ENCODE measurements at regions of chr2 and their contacts with region 1.

Region 1: DNA sequence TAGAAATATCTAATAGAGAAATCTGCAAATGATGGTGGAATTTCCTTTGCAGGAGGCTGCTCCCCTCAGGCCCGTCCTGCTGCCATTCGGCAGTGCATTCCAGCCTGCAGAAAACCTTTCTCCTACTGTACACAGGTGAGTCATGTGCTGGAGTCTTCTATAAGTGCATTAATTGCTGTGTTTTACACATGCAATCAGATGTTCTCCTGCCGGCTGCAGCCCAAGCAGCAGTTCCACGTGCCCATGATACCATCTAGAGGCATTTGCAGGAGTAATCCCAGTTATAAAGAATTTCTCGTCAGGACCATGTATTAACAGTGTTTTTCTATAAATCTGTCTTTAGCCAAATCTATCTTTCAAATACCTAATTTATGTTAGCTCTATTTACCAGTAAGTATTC is 304.7 kb upstream of the HNMT start:
- DNase-seq: peak; percentile 36
- H3K4me3 ChIP-seq: no peak overlapping the region
- H3K27ac ChIP-seq: no peak overlapping the region
- H3K4me1 ChIP-seq: no peaks in the 10 kb centered on the region
- H3K27me3 ChIP-seq: no peaks in the 10 kb centered on the region
- CTCF ChIP-seq: peak; percentile 28 to 52

Region 2: DNA sequence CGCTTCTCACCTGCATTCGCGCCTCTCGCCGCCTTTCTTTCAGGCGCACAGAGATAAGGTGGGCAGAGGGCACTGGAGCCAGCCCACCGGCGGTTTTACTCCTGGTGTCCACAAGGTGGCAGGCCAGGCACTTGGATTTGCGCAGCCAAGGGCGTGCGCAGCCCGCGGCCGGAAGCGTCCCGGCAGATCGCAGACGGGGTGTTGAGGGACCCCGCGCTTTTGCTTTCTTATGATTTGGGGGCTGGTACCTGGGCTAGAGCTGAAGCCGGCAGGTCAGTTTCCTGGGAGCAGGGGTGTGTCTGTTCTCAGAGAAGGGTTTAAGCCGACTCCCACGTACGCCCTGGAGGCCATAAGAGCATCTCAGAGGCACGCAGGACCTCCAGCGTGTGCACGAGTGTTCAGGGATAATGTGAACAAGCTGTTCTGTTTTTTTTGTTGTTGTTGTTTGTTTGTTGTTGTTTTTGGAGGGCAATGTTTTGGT is 1236.1 kb before region 1 on chr2:
- CTCF ChIA-PET with region 1: no interaction called
- dilution Hi-C with region 1: no loop called
- in situ Hi-C with region 1: loop called (anchors 25 kb)
- intact Hi-C with region 1: loop called (anchors 1 kb)
- DNase-seq: peak; percentile 45
- H3K4me3 ChIP-seq: peak overlapping the region; percentile 34 to 46 (median 41)
- H3K27ac ChIP-seq: no peak overlapping the region
- H3K4me1 ChIP-seq: no peaks in the 10 kb centered on the region
- H3K27me3 ChIP-seq: peaks cover 3% of the 10 kb centered on the region
- CTCF ChIP-seq: peak; percentile 74 to 87

Region 3: DNA sequence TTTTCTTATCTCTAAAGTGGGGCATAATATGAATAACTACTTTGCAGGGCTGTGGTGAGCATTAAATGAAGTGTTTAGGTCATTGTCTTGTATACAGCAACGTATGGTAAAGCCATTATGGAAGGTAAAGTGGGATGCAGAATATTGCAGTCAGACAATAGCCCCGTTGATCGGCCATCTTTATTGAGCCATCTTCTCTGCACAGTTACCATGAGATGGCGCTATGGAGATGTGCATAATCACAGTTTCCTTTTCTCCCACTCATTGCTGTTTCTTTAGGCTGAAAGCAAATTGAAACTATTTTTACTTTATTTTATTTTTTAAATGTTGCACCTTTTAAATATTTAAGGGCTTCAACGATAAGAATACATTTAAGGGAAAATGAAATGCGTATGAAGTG is 785.4 kb before region 1 on chr2:
- CTCF ChIA-PET with region 1: no interaction called
- dilution Hi-C with region 1: no loop called
- in situ Hi-C with region 1: no loop called
- intact Hi-C with region 1: loop called (anchors 1 kb)
- DNase-seq: no peak
- H3K4me3 ChIP-seq: no peak overlapping the region
- H3K27ac ChIP-seq: no peak overlapping the region
- H3K4me1 ChIP-seq: no peaks in the 10 kb centered on the region
- H3K27me3 ChIP-seq: no peaks in the 10 kb centered on the region
- CTCF ChIP-seq: peak; percentile 35 to 54

Region 4: DNA sequence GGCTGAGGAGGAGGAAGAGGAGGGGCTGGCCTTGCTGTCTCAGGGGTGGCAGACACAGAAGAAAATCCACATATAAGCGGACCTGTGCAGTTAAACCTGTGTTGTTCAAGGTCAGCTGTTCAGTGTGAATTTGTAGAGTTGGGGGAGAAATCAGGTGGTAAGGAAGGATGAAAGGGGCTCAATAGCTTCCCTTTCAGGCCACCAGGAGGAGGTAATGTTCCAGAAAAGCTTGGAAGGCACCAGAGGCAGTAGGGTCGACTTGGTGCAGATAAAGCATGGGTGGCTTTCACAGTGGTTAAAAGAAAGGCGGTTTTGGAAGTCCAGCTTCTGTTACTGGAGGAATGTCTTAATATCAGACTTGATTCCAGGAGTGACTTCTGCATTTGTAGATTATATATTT is 726.9 kb before region 1 on chr2:
- CTCF ChIA-PET with region 1: no interaction called
- dilution Hi-C with region 1: no loop called
- in situ Hi-C with region 1: no loop called
- intact Hi-C with region 1: loop called (anchors 1 kb)
- DNase-seq: peak; percentile 14
- H3K4me3 ChIP-seq: no peak overlapping the region
- H3K27ac ChIP-seq: no peak overlapping the region
- H3K4me1 ChIP-seq: no peaks in the 10 kb centered on the region
- H3K27me3 ChIP-seq: no peaks in the 10 kb centered on the region
- CTCF ChIP-seq: peak; percentile 63 to 82

Region 5: GRCh38 chr2:137161250-137161649 is 498.4 kb before region 1 on chr2:
- CTCF ChIA-PET with region 1: no interaction called
- dilution Hi-C with region 1: no loop called
- in situ Hi-C with region 1: no loop called
- intact Hi-C with region 1: loop called (anchors 2 kb)
- DNase-seq: no peak
- H3K4me3 ChIP-seq: no peak overlapping the region
- H3K27ac ChIP-seq: no peak overlapping the region
- H3K4me1 ChIP-seq: peaks cover 7% of the 10 kb centered on the region
- H3K27me3 ChIP-seq: no peaks in the 10 kb centered on the region
- CTCF ChIP-seq: no peak

Region 6: GRCh38 chr2:137467246-137467862 is 192.3 kb before region 1 on chr2:
- CTCF ChIA-PET with region 1: no interaction called
- dilution Hi-C with region 1: no loop called
- in situ Hi-C with region 1: no loop called
- intact Hi-C with region 1: loop called (anchors 2 kb)
- DNase-seq: peak; percentile 48
- H3K4me3 ChIP-seq: no peak overlapping the region
- H3K27ac ChIP-seq: no peak overlapping the region
- H3K4me1 ChIP-seq: no peaks in the 10 kb centered on the region
- H3K27me3 ChIP-seq: peaks cover 2% of the 10 kb centered on the region
- CTCF ChIP-seq: peak; percentile 77 to 87

Region 7: GRCh38 chr2:138381373-138381772 is 721.8 kb after region 1 on chr2:
- CTCF ChIA-PET with region 1: no interaction called
- dilution Hi-C with region 1: no loop called
- in situ Hi-C with region 1: no loop called
- intact Hi-C with region 1: no loop called
- DNase-seq: no peak
- H3K4me3 ChIP-seq: no peak overlapping the region
- H3K27ac ChIP-seq: no peak overlapping the region
- H3K4me1 ChIP-seq: no peaks in the 10 kb centered on the region
- H3K27me3 ChIP-seq: no peaks in the 10 kb centered on the region
- CTCF ChIP-seq: no peak

Measured in mammary epithelial cell (primary cell).